ENCODE measurements at regions of chr12 and their contacts with region 1.

Region 1: GRCh38 chr12:79187032-79187431 is 322.5 kb downstream of the SYT1 start:
- DNase-seq: peak; percentile 44
- H3K4me3 ChIP-seq: no peak overlapping the region
- H3K27ac ChIP-seq: no peak overlapping the region
- H3K4me1 ChIP-seq: peaks cover 67% of the 10 kb centered on the region
- H3K27me3 ChIP-seq: no peaks in the 10 kb centered on the region
- CTCF ChIP-seq: no peak

Region 2: DNA sequence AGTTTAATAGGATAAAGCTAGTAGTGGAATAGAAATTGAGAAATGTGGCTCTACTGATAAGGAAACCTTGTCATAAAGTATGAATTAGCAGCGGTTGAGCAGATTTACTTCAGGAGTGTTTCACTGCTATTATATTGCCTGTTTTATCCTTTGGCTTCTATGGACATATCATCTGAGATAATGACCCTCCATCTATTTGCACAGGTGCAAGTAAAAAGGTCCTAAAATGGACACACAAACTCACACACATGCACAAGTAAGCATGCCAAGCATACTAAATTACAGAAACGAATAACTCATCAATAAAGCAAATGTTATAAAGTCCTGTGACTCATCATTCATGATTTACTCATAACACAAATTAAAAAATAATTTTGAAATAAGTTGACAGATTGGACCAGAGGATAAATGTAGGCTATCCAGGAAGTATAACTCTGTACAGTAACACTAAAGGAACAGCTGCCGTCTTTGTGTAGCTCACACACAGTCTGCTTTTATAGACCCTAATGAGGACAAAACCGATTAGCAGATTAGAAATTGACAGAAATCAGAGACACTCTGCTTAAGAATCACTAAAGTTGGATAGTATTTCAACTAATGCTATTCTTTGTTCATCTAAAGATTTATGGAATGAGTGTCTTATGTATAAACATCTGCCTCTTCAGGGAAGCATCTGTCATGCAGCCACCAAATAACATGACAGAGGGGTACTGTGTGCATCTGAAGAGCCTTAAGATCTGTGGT is 248.5 kb before region 1 on chr12:
- CTCF ChIA-PET with region 1: no interaction called
- POLR2A ChIA-PET with region 1: no interaction called
- intact Hi-C with region 1: loop called (anchors 10 kb)
- DNase-seq: peak; percentile 89
- H3K4me3 ChIP-seq: peak overlapping the region; percentile 5
- H3K27ac ChIP-seq: peak overlapping the region; percentile 64
- H3K4me1 ChIP-seq: peaks cover 53% of the 10 kb centered on the region
- H3K27me3 ChIP-seq: no peaks in the 10 kb centered on the region
- CTCF ChIP-seq: no peak

Measured in A673 (cell line).